Caco-2 (cell line): ENCODE measurements at regions of chrX and their contacts with region 1.

Region 1: GRCh38 chrX:123732670-123733363 is at the start of gene THOC2:
- DNase-seq: peak; percentile 83 to 86
- H3K4me3 ChIP-seq: peak within 1 kb of the TSS; percentile 63
- H3K4me3 Mint-ChIP-seq: peak within 1 kb of the TSS; percentile 94
- H3K27ac Mint-ChIP-seq: peak within 1 kb of the TSS; percentile 99
- H3K4me1 ChIP-seq: no peaks in the 10 kb centered on the region; the same call in 1 of the 2 replicates
- H3K4me1 Mint-ChIP-seq: no peaks in the 10 kb centered on the region
- H3K27me3 ChIP-seq: no peaks in the 10 kb centered on the region
- H3K27me3 Mint-ChIP-seq: no peaks in the 10 kb centered on the region
- CTCF ChIP-seq: peak in 1 of 2 experiments; percentile 22
- total RNA-seq, gene THOC2: 79.9 and 85.4 TPM in 2 replicates

Region 2: DNA sequence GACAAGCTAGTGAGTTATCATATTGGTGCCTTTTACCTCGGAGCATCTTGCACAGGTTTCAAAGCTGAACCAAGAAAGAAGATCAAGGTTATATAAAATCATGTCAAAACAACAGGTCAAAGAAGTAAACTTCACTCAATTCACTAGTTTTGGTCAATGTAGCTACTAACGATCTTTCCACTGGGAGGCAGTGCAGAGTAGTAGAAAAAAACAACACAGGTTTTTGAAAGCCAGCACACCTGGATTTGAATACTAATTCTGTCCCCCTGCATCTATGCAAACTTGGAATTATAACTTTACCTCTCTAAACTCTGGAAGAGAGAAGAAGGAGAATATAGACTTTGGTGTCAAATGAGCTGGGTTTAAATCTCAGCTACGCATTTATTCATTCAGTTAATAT is 282.6 kb before region 1 on chrX:
- CTCF ChIA-PET with region 1: no interaction called
- POLR2A ChIA-PET with region 1: no interaction called
- intact Hi-C with region 1: loop called (anchors 5 kb)
- DNase-seq: peak in 1 of 2 experiments; percentile 1
- H3K4me3 ChIP-seq: no peak overlapping the region
- H3K4me3 Mint-ChIP-seq: no peak overlapping the region
- H3K27ac Mint-ChIP-seq: no peak overlapping the region
- H3K4me1 ChIP-seq: no peaks in the 10 kb centered on the region
- H3K4me1 Mint-ChIP-seq: no peaks in the 10 kb centered on the region
- H3K27me3 ChIP-seq: no peaks in the 10 kb centered on the region
- H3K27me3 Mint-ChIP-seq: no peaks in the 10 kb centered on the region
- CTCF ChIP-seq: peak; percentile 36 to 46

Region 3: DNA sequence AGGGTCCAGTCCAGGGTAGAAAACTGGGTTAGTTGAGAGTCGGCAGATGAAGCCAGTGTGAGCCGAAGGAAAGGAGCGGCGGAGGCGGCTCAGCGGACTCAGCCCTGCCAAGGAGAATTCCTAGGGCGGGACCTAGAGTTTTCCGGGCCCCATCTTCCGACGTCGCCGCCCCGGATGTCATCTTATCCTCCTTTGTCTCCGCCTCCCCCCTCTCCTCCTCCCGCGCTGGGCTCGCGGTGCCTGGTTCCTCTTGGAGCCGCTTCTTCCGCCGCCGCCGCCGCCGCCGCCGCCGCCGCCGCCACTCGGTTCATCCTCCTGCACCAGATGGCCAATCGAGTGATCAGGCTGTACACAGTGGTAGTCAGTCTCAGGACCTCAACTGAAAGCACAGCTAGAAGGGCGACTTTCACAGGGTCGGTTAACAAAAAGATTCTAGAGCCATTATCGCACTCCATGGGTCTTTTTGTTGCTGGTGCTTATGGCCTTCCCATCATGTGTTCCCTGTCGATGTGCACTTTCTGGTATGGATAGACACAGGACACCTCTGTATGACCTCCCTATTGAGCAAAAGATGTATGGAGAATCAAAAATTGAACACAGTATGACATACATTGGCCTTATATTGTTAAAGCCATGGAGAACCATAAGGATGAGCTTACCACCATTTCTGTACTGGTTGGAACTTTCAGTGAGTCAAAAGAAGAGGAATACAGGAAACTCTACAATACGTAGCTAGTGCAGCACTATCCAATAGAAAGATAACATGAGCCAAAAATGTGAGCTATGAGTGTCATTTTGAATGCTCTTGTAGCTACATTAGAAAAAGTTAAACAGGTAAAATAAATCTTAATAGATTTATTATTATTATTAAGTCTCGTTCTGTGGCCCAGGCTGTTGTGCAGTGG is 32.4 kb after region 1 on chrX:
- CTCF ChIA-PET with region 1: no interaction called
- POLR2A ChIA-PET with region 1: no interaction called
- intact Hi-C with region 1: loop called (anchors 2 kb)
- DNase-seq: peak; percentile 85 to 90
- H3K4me3 ChIP-seq: peak overlapping the region; percentile 40
- H3K4me3 Mint-ChIP-seq: peak overlapping the region; percentile 74
- H3K27ac Mint-ChIP-seq: peak overlapping the region; percentile 71
- H3K4me1 ChIP-seq: 0 out of 2 replicates have a peak, but pooled peaks cover 4% of the 10 kb centered on the region
- H3K4me1 Mint-ChIP-seq: peaks cover 4% of the 10 kb centered on the region
- H3K27me3 ChIP-seq: no peaks in the 10 kb centered on the region
- H3K27me3 Mint-ChIP-seq: no peaks in the 10 kb centered on the region
- CTCF ChIP-seq: no peak